SK-N-SH (cell line): ENCODE measurements at regions of chr16 and their contacts with region 1.

Region 1: GRCh38 chr16:4957720-4958509 is at the start of gene SEC14L5:
- DNase-seq: peak; percentile 100
- H3K4me3 ChIP-seq: peak within 1 kb of the TSS; percentile 52 to 68
- H3K27ac ChIP-seq: no peak within 1 kb of the TSS
- H3K4me1 ChIP-seq: peaks cover 0 to 8% of the 10 kb centered on the region in 2 experiments; a peak in 1 of 4 replicates
- H3K27me3 ChIP-seq: no peaks in the 10 kb centered on the region
- CTCF ChIP-seq: no peak
- EP300 ChIP-seq: no peak
- RAD21 ChIP-seq: no peak
- polyA plus RNA-seq, gene SEC14L5: 0.03 and 0.08 TPM in 2 replicates

Region 2: GRCh38 chr16:4550591-4550990 is 407.3 kb before region 1 on chr16:
- CTCF ChIA-PET with region 1: interaction called, 10 read pairs
- POLR2A ChIA-PET with region 1: no interaction called
- DNase-seq: no peak
- H3K4me3 ChIP-seq: no peak overlapping the region
- H3K27ac ChIP-seq: no peak overlapping the region
- H3K4me1 ChIP-seq: no peaks in the 10 kb centered on the region; a peak in 1 of 4 replicates
- H3K27me3 ChIP-seq: no peaks in the 10 kb centered on the region; the same call in 1 of the 2 replicates
- CTCF ChIP-seq: no peak
- EP300 ChIP-seq: no peak
- RAD21 ChIP-seq: no peak

Region 3: DNA sequence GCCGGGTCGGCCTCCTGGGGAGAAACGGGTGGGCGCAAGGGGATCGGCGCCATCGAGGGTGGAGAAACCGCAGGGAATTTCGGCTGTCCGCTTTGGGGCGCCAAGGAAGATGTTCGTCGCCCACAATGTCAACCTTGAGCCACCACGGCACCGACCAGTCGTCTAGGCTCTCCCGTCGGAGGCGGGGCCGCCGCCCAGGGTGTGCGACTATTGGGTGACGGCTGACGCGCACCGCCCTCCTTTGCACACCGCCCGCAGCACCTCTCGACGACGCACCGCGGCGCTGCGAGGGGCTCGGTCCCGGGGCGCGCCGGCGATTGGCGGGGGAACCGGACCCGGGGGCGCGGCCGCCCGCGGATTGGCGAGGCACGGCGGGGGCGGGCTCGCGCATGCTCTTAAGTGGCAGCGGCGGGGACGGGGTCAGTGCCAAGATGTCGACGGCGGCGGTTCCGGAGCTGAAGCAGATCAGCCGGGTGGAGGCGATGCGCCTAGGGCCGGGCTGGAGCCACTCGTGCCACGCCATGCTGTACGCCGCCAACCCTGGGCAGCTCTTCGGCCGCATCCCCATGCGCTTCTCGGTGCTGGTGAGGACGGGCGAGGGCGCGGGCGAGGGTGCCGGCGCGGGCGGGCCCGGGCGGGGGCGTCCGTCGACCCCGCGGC is 264.5 kb before region 1 on chr16 and contains the start of gene NUDT16L1:
- CTCF ChIA-PET with region 1: interaction called, 16 read pairs
- POLR2A ChIA-PET with region 1: no interaction called
- DNase-seq: peak; percentile 100
- H3K4me3 ChIP-seq: peak within 1 kb of the TSS; percentile 91 to 97
- H3K27ac ChIP-seq: peak within 1 kb of the TSS; percentile 47 to 88; a peak in 3 of 4 replicates
- H3K4me1 ChIP-seq: peaks cover 0 to 26% of the 10 kb centered on the region in 2 experiments; a peak in 1 of 4 replicates
- H3K27me3 ChIP-seq: no peaks in the 10 kb centered on the region
- CTCF ChIP-seq: no peak
- EP300 ChIP-seq: no peak
- RAD21 ChIP-seq: no peak
- polyA plus RNA-seq, gene NUDT16L1: 45.8 and 45.9 TPM in 2 replicates

Region 4: DNA sequence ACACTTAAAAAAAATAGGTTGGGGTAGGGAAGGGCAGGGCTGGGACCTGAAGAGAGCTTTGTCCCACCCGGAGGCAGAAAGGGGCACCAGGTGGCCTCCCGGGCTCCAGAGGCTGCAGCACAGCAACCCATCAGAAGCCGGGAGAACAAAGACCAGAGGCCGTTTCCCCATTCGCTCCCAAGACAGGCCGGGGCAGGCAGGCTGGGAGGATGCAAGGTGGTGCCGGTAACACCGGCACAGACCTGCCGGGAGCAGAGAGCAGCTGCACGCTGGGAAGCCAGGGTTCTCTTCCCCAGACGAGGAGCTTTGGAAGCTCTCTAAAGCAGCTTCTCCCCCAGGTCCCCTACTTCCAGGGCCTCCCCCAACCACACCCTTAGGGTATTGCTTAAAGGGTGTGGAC is 26.5 kb before region 1 on chr16:
- CTCF ChIA-PET with region 1: interaction called, 23 read pairs
- POLR2A ChIA-PET with region 1: no interaction called
- DNase-seq: no peak
- H3K4me3 ChIP-seq: no peak overlapping the region
- H3K27ac ChIP-seq: no peak overlapping the region
- H3K4me1 ChIP-seq: peaks cover 0 to under 1% of the 10 kb centered on the region in 2 experiments; a peak in 1 of 4 replicates
- H3K27me3 ChIP-seq: no peaks in the 10 kb centered on the region
- CTCF ChIP-seq: no peak
- EP300 ChIP-seq: no peak
- RAD21 ChIP-seq: no peak

Region 5: DNA sequence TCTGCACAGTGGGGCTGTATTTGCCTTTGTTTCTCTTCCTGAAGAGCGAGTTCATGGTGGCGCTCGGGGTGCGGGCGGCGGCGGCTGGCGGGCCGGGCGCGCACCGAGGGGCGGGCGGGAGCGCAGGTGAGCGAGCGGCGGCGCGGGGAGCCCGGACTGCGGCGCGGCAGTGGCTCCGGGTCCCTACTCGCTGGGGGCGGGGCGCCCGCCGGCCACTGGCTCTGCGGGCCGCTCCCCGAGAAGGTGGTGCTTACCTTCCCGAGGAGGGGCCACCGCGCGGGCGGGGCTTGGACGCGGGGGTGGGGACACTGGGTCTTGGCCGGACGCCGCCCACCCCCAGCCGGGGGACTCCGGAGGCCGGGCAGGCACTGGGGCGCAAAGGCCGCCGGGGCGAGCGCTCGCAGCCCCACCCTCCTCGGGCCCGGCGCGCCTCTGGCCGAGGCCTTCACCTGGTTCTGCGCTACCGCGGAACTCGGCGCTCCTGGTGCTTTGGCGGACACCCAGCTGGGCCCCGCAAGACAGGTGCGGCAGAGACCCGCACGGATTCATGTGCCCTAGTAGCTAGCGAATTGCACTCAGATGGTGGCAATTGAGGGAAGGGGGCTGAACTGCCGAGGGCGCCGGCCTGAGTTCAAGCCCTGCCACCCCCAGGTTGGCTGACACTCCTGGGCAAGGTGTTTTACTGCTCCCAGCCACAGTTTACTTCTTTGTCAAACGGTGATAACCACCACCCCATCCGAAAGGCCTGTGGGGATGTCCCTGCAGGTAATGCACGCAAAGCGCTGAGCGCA is 20.7 kb before region 1 on chr16 and contains the start of gene PPL:
- CTCF ChIA-PET with region 1: interaction called, 23 read pairs
- POLR2A ChIA-PET with region 1: no interaction called
- DNase-seq: peak; percentile 72
- H3K4me3 ChIP-seq: peak within 1 kb of the TSS; percentile 67 to 69
- H3K27ac ChIP-seq: no peak within 1 kb of the TSS
- H3K4me1 ChIP-seq: peaks cover 0 to 5% of the 10 kb centered on the region in 2 experiments; a peak in 1 of 4 replicates
- H3K27me3 ChIP-seq: no peaks in the 10 kb centered on the region
- CTCF ChIP-seq: no peak
- EP300 ChIP-seq: no peak
- RAD21 ChIP-seq: no peak
- polyA plus RNA-seq, gene PPL: 16.8 and 24.6 TPM in 2 replicates

Region 6: DNA sequence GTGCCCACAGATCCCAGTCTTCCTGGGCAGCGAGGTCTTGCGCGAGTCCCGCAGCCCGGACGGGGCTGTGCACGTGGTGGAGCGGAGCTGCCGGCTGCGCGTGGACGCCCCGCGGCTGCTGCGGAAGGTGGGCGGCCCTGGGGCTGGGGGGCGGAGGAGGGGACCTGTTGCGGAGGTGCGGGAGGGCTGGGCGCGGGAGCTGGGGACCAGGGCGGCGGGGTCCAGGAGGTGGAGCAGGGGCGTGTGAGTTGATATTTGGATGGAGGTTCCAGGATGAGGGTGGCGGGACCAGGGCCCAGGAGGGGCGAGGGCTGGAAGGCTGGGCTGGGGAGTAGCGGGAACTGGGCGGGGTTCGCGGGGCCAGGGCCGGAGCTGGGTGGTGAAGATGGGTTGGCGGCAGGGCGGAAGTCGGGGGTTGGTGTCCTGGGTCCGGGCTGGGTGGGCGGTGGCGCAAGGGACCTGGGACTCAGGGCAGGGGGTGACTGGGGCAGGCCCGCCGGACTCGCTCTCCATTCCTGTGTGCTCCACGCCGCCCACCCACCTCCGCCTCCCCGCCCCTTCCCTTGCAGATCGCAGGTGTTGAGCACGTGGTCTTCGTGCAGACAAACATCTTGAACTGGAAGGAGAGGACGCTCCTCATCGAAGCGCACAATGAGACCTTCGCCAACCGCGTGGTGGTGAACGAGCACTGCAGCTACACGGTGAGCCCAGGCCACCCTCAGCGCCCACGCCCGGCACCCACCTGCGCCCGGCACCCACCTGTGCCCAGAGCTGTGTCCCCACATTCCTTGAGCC is 29.9 kb after region 1 on chr16:
- CTCF ChIA-PET with region 1: no interaction called
- POLR2A ChIA-PET with region 1: no interaction called
- DNase-seq: peak; percentile 73
- H3K4me3 ChIP-seq: no peak overlapping the region; a peak in 1 of 4 replicates
- H3K27ac ChIP-seq: no peak overlapping the region
- H3K4me1 ChIP-seq: peaks cover 0 to 5% of the 10 kb centered on the region in 2 experiments; a peak in 1 of 4 replicates
- H3K27me3 ChIP-seq: peaks cover 22% of the 10 kb centered on the region
- CTCF ChIP-seq: no peak
- EP300 ChIP-seq: no peak
- RAD21 ChIP-seq: no peak

Region 7: GRCh38 chr16:5108505-5109158 is 150.7 kb after region 1 on chr16:
- CTCF ChIA-PET with region 1: no interaction called
- POLR2A ChIA-PET with region 1: no interaction called
- DNase-seq: no peak
- H3K4me3 ChIP-seq: no peak overlapping the region
- H3K27ac ChIP-seq: no peak overlapping the region
- H3K4me1 ChIP-seq: no peaks in the 10 kb centered on the region
- H3K27me3 ChIP-seq: no peaks in the 10 kb centered on the region
- CTCF ChIP-seq: no peak
- EP300 ChIP-seq: no peak
- RAD21 ChIP-seq: no peak